Activated CD4-positive, alpha-beta memory T cell treated with anti-CD3 and anti-CD28 coated beads, Interleukin-2, amount 10 ng/mL, durations not matched to agents 7 days and 5 days (primary cell): ENCODE measurements at regions of chr10 and their contacts with region 1.

Region 1: DNA sequence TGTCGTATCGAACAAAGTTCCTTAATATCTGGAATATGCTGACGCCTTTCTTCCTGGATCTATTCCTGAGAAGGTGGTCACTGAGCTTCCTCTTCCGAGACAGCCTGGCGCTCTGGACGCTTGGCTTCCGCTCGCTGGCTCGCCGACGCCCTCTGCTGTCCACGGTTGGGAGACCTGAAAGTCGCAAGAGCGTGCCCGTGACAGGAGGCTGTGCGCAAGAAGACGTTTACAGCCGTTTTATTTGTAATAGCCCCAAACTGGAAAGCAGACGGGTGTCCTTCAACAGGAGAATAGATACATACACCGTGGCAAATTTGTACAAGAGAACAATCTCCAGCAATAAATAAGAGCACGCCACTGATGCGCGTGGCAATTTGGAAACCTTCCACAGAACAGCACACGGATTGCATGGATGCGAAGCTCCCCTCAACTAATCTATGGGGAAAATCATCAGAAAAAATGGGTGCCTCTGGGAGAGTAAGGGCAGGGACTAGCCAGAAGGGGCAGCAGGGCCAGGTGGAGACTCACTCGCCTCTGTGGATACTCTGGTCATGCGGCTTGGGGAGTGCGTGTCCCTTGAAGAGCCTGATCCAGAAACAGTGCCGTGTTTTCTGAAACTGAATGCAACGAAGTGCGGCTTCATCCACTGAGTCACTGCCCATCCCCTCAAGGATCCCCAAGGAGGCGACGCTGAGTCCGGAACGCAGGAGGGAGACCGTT is 41.5 kb upstream of the BNIP3 start:
- DNase-seq: peak; percentile 79
- H3K4me3 Mint-ChIP-seq: no peak overlapping the region
- H3K27ac Mint-ChIP-seq: no peak overlapping the region
- H3K4me1 Mint-ChIP-seq: peaks cover 4% of the 10 kb centered on the region
- H3K27me3 Mint-ChIP-seq: peaks cover 24% of the 10 kb centered on the region

Region 2: DNA sequence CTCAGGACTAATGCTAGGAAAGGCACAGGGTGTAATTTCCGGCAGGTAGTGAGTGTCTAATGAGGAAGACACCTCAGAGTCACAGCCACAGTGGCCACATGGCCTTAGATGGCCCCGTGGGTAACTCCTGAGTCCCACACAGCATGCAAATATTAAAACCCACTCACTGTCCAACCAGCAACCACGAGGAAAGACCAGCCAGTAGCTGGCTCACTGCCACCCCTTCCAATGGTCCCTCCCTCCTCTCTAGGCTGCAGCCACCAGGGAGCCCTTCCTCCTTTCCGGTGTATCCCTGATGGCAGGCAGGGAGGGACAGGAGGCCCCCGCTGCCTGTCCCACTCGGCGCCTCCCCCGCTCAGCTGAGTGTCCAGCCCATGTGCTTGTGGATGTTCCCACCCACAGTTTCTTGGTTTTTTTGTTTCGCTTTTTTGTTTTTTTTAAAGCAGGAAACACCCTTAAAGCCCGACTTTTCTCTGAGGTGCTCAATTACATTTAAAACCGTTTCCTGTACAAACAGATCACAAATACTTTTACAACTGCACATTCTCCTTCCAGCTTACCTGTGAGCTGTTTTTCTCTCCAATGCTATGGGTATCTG is 50.7 kb before region 1 on chr10:
- CTCF ChIA-PET with region 1: interaction called, 18 read pairs
- POLR2A ChIA-PET with region 1: no interaction called
- DNase-seq: peak; percentile 50
- H3K4me3 Mint-ChIP-seq: peak overlapping the region; percentile 72
- H3K27ac Mint-ChIP-seq: peak overlapping the region; percentile 89
- H3K4me1 Mint-ChIP-seq: peaks cover 61% of the 10 kb centered on the region
- H3K27me3 Mint-ChIP-seq: no peaks in the 10 kb centered on the region

Region 3: GRCh38 chr10:132011024-132011423 is 12.2 kb before region 1 on chr10:
- CTCF ChIA-PET with region 1: interaction called, 11 read pairs
- POLR2A ChIA-PET with region 1: no interaction called
- DNase-seq: no peak
- H3K4me3 Mint-ChIP-seq: no peak overlapping the region
- H3K27ac Mint-ChIP-seq: no peak overlapping the region
- H3K4me1 Mint-ChIP-seq: peaks cover 2% of the 10 kb centered on the region
- H3K27me3 Mint-ChIP-seq: peaks cover 23% of the 10 kb centered on the region

Region 4: DNA sequence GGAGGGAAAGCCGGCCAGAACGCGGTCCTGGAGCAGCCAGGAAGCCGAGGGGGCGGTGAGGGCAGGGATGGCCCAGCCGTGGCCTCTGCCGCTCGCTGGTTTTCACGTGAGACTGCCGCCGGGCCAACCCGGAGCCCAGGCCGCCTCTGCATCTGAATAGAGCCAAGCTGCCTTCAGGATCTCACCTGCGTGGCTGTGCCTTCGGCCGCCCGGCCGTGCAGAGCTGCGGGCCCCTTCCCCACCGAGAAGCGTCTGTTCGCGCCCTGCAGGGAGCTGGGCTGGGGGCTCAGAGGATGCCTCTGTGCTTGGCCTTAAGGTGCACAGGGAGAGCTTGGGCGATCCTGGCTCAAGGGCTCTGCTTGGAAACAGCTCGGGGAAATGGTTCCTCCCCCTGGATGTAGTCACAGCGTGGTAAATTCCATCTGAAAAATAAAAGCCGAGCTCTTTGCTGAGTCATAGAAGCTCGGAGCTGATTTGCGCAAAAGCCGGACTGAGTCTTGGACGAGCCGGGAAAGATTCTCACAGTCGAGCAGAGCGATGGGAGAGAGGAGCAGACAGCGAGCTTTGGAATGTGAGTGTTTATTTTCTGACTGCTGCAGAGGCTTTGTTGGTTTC is 42.3 kb after region 1 on chr10 and contains the start of gene JAKMIP3:
- CTCF ChIA-PET with region 1: no interaction called
- POLR2A ChIA-PET with region 1: no interaction called
- DNase-seq: no peak
- H3K4me3 Mint-ChIP-seq: peak within 1 kb of the TSS; percentile 30
- H3K27ac Mint-ChIP-seq: no peak within 1 kb of the TSS
- H3K4me1 Mint-ChIP-seq: no peaks in the 10 kb centered on the region
- H3K27me3 Mint-ChIP-seq: peaks cover 5% of the 10 kb centered on the region
- total RNA-seq, gene JAKMIP3: 0.83 to 0.90 TPM

Region 5: GRCh38 chr10:132096223-132096622 is 73.0 kb after region 1 on chr10:
- CTCF ChIA-PET with region 1: no interaction called
- POLR2A ChIA-PET with region 1: no interaction called
- DNase-seq: peak; percentile 61
- H3K4me3 Mint-ChIP-seq: no peak overlapping the region
- H3K27ac Mint-ChIP-seq: no peak overlapping the region
- H3K4me1 Mint-ChIP-seq: peaks cover 23% of the 10 kb centered on the region
- H3K27me3 Mint-ChIP-seq: peaks cover 12% of the 10 kb centered on the region